SK-N-SH (cell line): ENCODE measurements at regions of chr5 and their contacts with region 1.

Region 1: DNA sequence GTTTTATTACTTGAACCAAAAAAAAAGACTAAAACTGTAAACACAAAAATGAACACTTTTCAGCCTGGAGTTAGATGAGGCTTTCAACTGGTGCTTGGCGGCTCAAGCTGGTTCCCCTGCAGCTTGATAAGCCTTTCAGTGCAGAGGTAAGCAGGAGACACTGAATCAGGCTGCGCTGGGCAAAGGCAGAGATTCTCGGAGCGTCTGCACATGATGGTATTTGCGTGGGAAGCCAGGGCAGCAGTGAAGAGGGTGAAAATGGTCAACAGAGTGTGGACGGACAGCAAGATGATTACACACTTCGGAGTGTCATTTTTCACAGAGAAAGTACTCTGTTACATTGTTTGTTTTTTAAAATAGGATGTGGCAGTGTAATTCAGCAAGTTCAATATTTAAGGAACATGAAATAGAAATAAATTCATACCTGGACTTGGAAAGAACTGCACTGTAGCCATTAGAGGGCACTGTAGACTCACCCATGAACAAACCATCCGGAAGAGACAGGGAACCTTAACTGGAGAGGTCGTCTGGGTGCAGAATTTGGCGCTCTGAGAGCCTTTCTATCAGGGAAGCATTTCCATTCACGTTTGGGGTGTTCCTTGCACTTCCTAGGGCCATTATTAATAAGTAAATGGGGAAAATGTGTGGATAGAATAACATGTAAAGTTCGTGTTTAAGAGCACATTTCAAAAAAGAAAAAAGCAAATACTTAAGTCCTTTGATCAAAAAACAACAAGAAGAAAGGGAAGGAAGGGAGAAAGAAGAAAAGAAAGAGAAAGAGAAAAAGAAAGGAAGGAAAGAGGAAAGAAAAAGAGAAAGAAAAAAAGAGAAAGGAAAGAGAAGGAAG is 69.8 kb downstream of the ICE1 start:
- DNase-seq: peak; percentile 81
- H3K4me3 ChIP-seq: peak overlapping the region in 1 of 2 experiments; percentile 41; a peak in 1 of 4 replicates
- H3K27ac ChIP-seq: peak overlapping the region in 1 of 2 experiments; percentile 32; a peak in 2 of 4 replicates
- H3K4me1 ChIP-seq: peaks cover 0 to 16% of the 10 kb centered on the region in 2 experiments; a peak in 2 of 4 replicates
- H3K27me3 ChIP-seq: no peaks in the 10 kb centered on the region
- CTCF ChIP-seq: peak; percentile 78
- EP300 ChIP-seq: 0 out of 4 replicates have a peak, but pooled peaks of 1 of the 2 experiments have one; percentile 27
- RAD21 ChIP-seq: peak; percentile 95

Region 2: DNA sequence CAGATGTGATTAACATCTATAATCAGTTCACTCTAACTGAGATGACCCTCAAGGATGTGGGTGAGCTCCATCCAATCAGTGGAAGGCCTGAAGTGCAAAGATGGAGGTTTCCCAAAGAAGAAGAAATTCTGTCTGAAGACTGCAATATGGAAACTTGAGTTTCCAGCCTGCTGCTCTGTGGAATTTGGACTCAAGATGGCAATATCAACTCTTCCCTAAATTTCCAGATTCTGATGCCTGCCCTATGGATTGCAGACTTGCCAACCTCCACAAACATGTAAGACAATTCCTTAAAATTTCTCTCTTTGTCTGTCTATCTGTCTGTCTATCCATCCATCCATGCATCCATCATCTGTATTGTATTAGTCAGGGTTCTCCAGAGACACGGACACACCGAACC is 16.1 kb after region 1 on chr5:
- CTCF ChIA-PET with region 1: interaction called, 13 read pairs
- POLR2A ChIA-PET with region 1: no interaction called
- DNase-seq: no peak
- H3K4me3 ChIP-seq: no peak overlapping the region
- H3K27ac ChIP-seq: no peak overlapping the region; a peak in 1 of 4 replicates
- H3K4me1 ChIP-seq: peaks cover 0 to 22% of the 10 kb centered on the region in 2 experiments; a peak in 2 of 4 replicates
- H3K27me3 ChIP-seq: no peaks in the 10 kb centered on the region
- CTCF ChIP-seq: no peak
- EP300 ChIP-seq: no peak
- RAD21 ChIP-seq: no peak

Region 3: DNA sequence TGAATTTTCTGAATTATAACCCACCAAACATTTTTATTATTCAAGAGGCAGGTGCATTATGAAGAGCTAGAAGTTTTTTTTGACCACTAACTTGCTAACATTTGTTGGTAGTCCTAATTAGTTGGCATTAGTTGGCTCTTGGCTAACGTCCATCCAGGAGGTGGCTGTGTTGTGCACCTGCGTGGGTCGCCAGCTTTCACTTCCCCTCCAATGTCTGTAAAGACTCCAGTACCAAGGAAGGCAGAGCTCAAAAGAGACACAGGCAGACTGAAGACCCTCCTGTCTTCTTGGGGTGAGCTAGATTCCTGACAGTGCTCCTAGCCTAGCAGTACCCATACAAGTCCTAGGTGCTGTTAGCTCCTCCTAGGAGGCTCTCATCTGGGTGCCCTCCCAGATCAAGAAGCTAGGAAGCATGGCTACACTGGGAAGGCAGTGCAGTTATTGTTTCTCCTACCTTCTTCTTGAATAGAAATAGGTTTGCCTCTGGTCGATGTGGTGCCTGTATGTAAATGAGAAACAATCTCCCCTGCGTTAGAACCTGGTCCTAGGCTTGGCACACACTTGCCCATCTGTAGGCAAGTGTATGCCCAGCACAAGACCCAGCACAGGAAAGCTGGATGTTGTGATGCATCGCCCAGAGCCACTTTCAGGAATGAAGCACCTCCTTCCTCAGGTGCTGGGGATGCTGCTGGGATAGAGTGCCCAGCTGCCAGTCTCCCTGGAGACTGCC is 121.1 kb after region 1 on chr5:
- CTCF ChIA-PET with region 1: interaction called, 30 read pairs
- POLR2A ChIA-PET with region 1: interaction called, 4 read pairs
- DNase-seq: no peak
- H3K4me3 ChIP-seq: no peak overlapping the region; a peak in 1 of 4 replicates
- H3K27ac ChIP-seq: peak overlapping the region in 1 of 2 experiments; percentile 100; a peak in 2 of 4 replicates
- H3K4me1 ChIP-seq: peaks cover 0 to 21% of the 10 kb centered on the region in 2 experiments; a peak in 2 of 4 replicates
- H3K27me3 ChIP-seq: no peaks in the 10 kb centered on the region
- CTCF ChIP-seq: no peak
- EP300 ChIP-seq: no peak
- RAD21 ChIP-seq: no peak

Region 4: GRCh38 chr5:5665225-5666075 is 173.1 kb after region 1 on chr5:
- CTCF ChIA-PET with region 1: interaction called, 15 read pairs
- POLR2A ChIA-PET with region 1: no interaction called
- DNase-seq: no peak
- H3K4me3 ChIP-seq: no peak overlapping the region
- H3K27ac ChIP-seq: peak overlapping the region in 1 of 2 experiments; percentile 99; a peak in 2 of 4 replicates
- H3K4me1 ChIP-seq: peaks cover 0 to 43% of the 10 kb centered on the region in 2 experiments; a peak in 2 of 4 replicates
- H3K27me3 ChIP-seq: no peaks in the 10 kb centered on the region
- CTCF ChIP-seq: no peak
- EP300 ChIP-seq: no peak
- RAD21 ChIP-seq: no peak

Region 5: GRCh38 chr5:6448622-6449464 is 956.5 kb after region 1 on chr5 and contains the start of gene UBE2QL1:
- CTCF ChIA-PET with region 1: interaction called, 12 read pairs
- POLR2A ChIA-PET with region 1: interaction called, 4 read pairs
- DNase-seq: peak; percentile 74
- H3K4me3 ChIP-seq: peak within 1 kb of the TSS in 1 of 2 experiments; percentile 51; a peak in 2 of 4 replicates
- H3K27ac ChIP-seq: peak within 1 kb of the TSS in 1 of 2 experiments; percentile 79; a peak in 2 of 4 replicates
- H3K4me1 ChIP-seq: peaks cover 0 to 10% of the 10 kb centered on the region in 2 experiments; a peak in 1 of 4 replicates
- H3K27me3 ChIP-seq: peaks cover 24% of the 10 kb centered on the region
- CTCF ChIP-seq: no peak
- EP300 ChIP-seq: no peak
- RAD21 ChIP-seq: no peak
- polyA plus RNA-seq, gene UBE2QL1: 0.28 and 0.84 TPM in 2 replicates

Region 6: DNA sequence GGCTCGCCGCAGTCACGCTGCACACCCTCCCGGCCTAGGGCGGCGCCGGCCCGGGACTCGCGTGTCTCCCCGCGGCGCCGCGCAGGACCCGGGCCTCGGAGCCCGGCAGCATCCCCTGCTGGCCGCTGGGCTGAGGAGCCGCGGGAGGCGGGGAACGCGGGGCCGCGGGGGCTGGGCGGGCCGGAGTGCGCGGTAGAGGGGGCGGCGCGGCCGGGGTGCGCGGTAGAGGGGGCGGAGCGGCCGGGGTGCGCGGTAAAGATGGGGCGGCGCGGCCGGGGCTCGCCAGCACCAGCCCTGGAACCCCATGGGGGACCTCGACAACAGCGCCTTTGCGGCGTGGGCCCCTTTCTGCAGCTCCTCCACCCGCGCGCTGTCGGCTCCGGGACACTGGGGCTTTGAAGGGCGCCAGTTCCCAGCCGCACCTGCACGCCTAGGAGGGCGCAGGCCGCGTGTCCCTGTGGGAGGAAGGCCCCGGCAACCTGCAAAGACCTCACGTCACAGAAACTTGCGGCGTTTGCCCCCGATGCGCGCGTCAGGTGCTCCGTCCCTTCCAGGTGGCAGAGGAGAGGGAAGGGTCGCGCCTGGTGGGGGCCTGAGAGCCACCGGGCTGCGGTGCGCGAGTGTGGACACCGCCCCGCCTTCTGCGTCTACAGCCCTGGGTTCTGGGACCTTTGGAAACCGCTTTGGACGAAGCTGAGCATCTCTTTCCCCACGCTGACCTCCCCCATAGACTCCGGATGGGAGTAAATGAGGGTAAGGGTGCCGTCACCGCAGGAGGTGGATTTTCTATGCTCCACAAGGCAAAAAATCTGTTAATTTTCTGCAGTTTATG is 1091.0 kb after region 1 on chr5:
- CTCF ChIA-PET with region 1: interaction called, 11 read pairs
- POLR2A ChIA-PET with region 1: no interaction called
- DNase-seq: peak; percentile 97
- H3K4me3 ChIP-seq: peak overlapping the region; percentile 39 to 48
- H3K27ac ChIP-seq: no peak overlapping the region
- H3K4me1 ChIP-seq: peaks cover 9 to 19% of the 10 kb centered on the region in 2 experiments; a peak in 1 of 4 replicates
- H3K27me3 ChIP-seq: no peaks in the 10 kb centered on the region
- CTCF ChIP-seq: peak; percentile 32
- EP300 ChIP-seq: no peak
- RAD21 ChIP-seq: peak; percentile 36